Mucosa of descending colon (tissue), 3 donors: ENCODE measurements at regions of chr19 and their contacts with region 1.

Region 1: GRCh38 chr19:4803736-4804695 is 12.5 kb downstream of the FEM1A start:
- DNase-seq: peak; percentile 57 to 63 (median 59)
- ATAC-seq: peak; percentile 85
- H3K4me3 ChIP-seq: no peak overlapping the region
- H3K4me1 ChIP-seq: no peaks in the 10 kb centered on the region
- CTCF ChIP-seq: no peak

Region 2: GRCh38 chr19:4732680-4733114 is 71.3 kb before region 1 on chr19:
- intact Hi-C with region 1: loop called in 1 of 2 experiments (anchors 5 kb)
- DNase-seq: peak in 2 of 3 donors; percentile 37 to 53
- ATAC-seq: peak; percentile 95
- H3K4me3 ChIP-seq: no peak overlapping the region
- H3K4me1 ChIP-seq: no peaks in the 10 kb centered on the region
- CTCF ChIP-seq: no peak

Region 3: DNA sequence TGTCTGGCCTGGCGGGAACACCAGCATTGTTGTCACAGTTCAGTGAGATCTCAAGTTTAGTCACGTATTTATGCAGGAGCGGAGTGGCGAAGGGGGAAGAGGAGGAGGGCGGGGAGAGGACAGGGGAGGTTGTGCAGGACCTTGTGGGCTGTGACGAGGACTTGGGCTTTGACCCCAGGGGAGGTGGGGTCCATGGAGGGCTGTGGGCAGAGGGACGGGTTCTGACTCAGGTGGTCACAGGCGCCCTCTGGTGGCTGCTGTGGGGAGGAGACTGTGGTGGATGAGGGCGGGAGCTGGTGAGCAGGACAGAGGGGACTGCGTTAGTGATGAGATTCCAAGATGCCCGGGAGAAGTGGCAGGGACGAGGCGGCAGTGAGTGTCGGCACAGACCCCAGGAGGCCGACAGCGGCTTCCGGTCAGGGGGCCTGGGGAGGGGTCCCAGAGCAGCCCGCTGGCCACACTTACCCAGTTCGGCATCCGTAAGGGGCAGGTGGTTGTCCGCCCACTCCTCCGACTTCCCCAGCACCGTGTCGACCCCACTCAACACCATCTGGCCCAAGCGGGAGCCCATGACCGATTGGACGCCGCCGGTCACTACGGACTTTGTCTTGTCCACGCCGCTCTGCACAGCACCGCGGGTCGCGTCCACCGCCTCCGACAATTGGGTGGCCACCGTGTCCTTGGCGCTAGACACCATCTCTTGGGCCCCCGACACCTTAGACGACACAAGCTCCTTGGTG is 47.7 kb after region 1 on chr19:
- intact Hi-C with region 1: loop called (anchors 5 to 10 kb)
- DNase-seq: peak; percentile 63 to 83 (median 77)
- ATAC-seq: peak; percentile 82
- H3K4me3 ChIP-seq: no peak overlapping the region
- H3K4me1 ChIP-seq: no peaks in the 10 kb centered on the region
- CTCF ChIP-seq: peak; percentile 62